GM13976 (cell line): ENCODE measurements at regions of chr1 and their contacts with region 1.

Region 1: DNA sequence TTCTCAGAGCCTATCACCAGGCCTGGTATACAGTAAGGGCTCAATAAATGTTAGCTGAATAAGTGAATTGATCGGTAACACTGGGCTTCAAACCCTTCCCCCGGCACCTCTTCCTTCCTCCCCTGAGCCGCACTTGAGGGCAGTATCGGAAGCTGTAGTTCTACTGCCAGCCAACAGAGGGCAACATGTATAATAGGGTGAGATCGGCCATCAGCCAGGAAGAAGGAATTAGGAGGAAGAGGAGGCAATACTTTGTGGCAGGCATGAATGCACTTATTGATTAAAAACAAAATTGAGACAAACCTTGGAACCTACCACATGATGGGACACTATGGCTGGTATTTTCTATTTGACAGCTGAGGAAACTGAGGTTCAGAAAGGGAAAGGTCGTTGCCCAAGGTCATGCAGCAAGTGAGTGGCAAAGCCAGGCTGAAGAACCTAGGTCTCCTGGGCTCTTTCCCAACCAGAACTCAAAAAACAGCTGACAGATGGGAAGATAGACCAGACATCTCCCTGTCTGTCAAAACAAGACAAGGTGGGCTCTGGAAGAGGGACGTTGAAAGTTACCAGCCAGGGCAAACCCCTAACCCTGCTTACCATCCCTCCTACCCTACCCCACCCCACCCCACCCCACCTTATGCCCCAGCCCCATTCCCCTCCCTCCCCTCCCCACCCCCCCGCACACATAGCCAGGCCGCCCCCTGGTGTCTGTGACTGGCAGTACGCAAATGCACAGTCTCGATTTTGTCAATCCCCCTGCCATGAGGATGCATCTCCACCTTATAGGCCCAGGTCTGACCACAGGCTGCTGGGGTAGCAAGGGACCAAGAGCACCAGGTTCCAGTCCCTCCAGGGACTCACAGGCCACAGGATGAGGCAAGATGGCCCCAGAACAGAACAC is 107.3 kb upstream of the RUNX3 start:
- DNase-seq: peak; percentile 81
- CTCF ChIP-seq: peak; percentile 70

Region 2: DNA sequence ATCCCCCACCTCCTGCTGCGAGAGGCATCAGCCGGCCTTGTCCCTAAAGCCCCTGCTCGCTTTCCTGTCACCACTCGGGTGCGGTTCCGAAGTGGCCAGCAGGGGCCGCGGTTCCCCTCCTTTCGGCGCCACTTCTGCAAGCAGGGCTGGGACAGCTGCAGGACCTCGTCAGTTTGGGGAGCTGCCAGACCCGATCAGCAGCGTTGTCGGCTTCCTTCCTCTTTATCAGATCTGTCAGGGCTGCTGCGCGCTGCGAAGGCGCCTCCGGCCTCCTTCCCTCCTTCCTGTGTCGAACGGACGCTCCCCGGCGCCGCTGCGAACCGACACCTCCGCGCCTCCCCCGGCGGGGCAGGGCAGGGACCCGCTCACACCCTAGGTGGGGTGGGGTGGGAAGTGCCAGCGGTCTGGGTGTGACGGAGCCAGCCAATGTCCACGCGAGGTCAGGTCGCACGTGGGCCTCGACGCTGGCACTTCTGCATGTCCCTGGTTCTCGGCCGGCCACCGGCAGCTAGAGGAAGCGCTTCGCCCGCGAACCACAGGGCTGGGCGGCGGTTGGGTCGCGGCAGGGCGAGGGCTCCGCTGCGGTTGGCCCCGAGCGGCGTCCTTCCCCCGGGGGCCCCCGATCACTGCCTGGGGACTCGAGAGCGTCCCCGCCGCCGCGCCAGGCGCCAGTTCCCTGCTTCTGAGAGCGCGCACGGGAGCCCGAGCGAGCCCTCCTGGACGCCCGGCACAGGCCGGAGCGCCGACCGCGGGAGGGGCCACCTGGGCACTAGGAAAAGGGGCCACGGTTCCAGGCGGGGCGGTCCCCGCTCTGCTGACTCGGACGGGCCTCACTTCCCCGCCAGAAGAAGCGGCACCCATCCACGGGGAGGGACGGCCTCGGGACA is 189.2 kb before region 1 on chr1:
- in situ Hi-C with region 1: loop called (anchors 10 kb)
- DNase-seq: peak; percentile 91
- CTCF ChIP-seq: peak; percentile 98

Region 3: GRCh38 chr1:24930204-24931145 is 106.9 kb before region 1 on chr1 and contains the start of gene RUNX3:
- in situ Hi-C with region 1: loop called (anchors 10 kb)
- DNase-seq: peak; percentile 97
- CTCF ChIP-seq: peak; percentile 16